BJ (cell line): ENCODE measurements at regions of chr12 and their contacts with region 1.

Region 1: DNA sequence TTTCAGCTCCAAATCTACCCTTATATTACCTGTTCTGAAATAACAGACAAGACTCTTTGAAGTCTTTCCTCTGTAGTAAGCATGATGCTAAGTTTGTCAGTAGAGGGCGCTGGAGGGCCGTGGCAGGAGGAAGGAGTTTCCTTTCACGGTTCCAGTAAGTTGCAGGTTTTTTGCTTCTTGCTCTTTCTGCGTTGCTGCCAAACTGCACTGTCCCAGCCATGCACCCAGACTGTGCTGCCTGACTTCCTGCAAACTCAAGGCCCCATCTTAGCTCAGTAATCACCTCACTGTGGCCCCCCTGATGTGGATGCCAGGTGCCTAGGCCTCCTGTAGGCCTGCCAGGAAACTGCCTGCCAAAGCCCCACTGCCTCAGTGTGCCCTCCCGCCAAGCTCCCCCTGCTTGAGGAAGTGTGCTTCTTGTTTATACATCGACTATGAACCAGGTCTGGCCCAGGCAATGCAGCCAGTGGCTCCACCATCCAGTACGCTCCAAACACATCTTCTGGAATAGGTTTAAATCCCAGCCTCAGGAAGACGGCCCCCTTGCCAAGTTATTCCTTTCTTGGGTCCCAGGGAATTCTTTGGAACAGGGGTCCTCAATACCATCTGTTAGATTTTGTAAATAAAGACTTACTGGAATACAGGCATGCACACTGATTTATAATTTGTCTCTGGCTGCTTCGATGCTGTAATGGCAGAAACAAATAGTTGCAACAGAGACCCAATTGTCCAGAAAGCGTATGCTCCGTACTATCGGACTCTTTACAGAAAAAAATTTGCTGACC is 193.7 kb upstream of the LRIG3 start:
- DNase-seq: peak; percentile 33
- H3K4me3 ChIP-seq: no peak overlapping the region
- H3K27me3 ChIP-seq: no peaks in the 10 kb centered on the region
- CTCF ChIP-seq: peak; percentile 90

Region 2: GRCh38 chr12:59077575-59078426 is 36.2 kb before region 1 on chr12:
- CTCF ChIA-PET with region 1: no interaction called
- POLR2A ChIA-PET with region 1: no interaction called
- DNase-seq: no peak
- H3K4me3 ChIP-seq: no peak overlapping the region
- H3K27me3 ChIP-seq: no peaks in the 10 kb centered on the region
- CTCF ChIP-seq: no peak

Region 3: GRCh38 chr12:59088673-59089072 is 25.4 kb before region 1 on chr12:
- CTCF ChIA-PET with region 1: no interaction called
- POLR2A ChIA-PET with region 1: no interaction called
- DNase-seq: no peak
- H3K4me3 ChIP-seq: no peak overlapping the region
- H3K27me3 ChIP-seq: no peaks in the 10 kb centered on the region
- CTCF ChIP-seq: no peak

Region 4: DNA sequence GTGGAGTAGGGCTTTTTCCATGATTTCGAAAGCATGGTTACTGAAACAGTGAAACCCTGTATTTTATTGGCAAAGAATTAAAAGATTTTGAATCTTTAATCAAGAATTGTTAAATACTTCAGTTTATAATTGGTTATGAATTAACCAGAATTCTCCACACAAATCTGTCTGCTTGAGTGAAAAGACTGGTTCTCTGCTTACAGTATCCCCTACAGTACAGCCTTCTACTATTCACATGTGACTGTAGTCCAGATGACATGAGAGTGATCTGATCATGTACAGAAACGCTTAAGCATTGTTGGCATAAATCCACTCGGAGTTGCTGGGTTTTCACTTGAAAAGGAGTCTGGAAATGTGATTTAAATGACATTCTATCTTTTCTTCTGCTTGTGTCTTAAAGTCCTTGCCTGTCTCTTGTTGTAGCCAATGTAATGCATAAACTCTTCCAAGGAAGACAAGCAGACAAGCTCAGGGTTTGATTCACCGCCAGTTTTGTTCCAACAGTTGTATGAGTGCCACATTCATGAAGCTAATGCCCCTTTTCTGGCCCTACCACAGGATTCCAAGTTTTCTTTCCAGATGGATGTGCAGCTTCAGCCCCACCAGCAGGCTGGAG is 28.3 kb after region 1 on chr12:
- CTCF ChIA-PET with region 1: interaction called, 23 read pairs
- POLR2A ChIA-PET with region 1: no interaction called
- DNase-seq: no peak
- H3K4me3 ChIP-seq: no peak overlapping the region
- H3K27me3 ChIP-seq: no peaks in the 10 kb centered on the region
- CTCF ChIP-seq: no peak

Region 5: GRCh38 chr12:59149997-59150642 is 36.1 kb after region 1 on chr12:
- CTCF ChIA-PET with region 1: interaction called, 28 read pairs
- POLR2A ChIA-PET with region 1: no interaction called
- DNase-seq: no peak
- H3K4me3 ChIP-seq: no peak overlapping the region
- H3K27me3 ChIP-seq: no peaks in the 10 kb centered on the region
- CTCF ChIP-seq: peak; percentile 83

Region 6: DNA sequence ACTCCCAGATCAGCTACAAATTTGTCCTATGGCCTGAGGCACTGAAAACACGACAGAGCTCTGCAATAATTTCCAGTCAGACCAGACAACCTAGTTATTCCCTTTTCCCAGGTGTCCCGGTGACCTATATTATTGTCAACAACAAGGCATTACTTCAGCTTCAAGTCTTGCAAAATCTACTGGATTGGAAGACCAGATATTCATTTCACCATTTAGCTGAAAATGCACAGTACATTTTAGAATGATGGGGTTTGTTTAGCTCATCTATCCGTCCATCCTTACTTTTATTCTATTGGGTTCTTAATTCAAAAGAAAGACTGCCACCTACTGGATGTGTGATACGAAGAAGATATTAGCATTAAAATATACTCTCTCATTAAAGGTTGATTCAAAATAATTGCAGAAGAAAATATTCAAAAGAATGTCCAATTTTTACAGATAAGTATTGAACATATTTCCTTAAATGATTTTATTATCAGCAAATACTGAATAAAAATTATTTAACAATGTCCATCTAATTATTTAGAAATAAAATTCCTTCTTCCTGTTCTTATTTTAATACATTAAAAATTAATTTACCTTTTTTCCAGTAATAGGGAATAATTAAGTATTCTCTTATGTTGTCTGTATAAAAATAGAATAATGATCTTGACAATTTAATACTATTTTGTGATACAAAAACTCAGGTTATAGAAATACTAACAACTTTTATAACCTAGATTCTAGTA is 51.1 kb after region 1 on chr12:
- CTCF ChIA-PET with region 1: interaction called, 18 read pairs
- POLR2A ChIA-PET with region 1: no interaction called
- DNase-seq: no peak
- H3K4me3 ChIP-seq: no peak overlapping the region
- H3K27me3 ChIP-seq: no peaks in the 10 kb centered on the region; the same call in 1 of the 2 replicates
- CTCF ChIP-seq: peak; percentile 46

Region 7: DNA sequence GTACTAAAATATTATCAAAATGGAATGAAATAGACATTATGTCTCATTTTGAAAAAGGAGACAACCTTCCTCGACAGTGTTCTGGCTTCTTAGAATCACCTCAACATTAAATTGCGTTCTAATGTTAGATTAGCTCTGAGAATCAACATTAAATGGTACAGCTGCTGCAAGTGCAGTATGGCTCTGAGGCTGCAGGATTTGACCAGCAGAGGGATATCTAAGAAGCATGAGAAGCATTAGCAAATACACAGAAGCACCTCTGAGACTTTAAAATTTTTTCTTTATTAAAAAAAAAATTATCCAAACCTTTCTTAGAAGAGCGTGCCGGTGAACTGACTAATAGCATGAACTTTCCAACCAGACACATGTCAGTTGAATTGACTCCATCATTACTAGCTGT is 59.7 kb after region 1 on chr12:
- CTCF ChIA-PET with region 1: interaction called, 18 read pairs
- POLR2A ChIA-PET with region 1: no interaction called
- DNase-seq: no peak
- H3K4me3 ChIP-seq: no peak overlapping the region
- H3K27me3 ChIP-seq: no peaks in the 10 kb centered on the region; the same call in 1 of the 2 replicates
- CTCF ChIP-seq: peak; percentile 33; the same call in 1 of the 2 replicates

Region 8: DNA sequence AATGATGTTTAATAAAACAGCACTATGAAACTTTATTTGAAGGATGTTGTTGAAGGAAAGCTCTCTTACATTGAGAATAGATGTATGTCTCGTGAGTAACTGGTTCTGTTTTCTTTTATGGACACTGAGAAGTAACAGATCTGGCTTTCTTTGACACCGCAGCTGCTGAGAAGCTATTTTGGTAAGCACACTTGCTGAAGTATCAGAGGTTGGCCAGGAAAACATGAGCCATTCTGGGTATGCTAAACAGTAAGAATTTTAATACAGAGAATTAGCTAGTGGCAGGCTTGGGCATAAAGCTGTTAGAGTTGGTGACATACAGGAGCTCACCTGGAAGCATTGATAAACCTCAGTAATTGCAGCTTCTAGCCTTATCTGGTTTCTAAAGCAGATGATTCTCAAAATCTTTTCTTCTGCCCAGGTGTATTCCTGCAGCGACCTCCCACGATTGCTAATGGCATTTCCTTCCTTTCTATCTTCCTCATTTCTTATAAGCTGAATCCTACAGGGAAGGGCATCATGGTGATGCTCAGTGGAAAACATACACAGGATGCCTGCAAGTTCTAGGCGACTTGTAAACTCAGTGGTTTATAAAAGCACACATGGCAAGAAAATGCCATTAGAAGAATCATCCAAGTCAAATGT is 190.2 kb after region 1 on chr12:
- CTCF ChIA-PET with region 1: no interaction called
- POLR2A ChIA-PET with region 1: no interaction called
- DNase-seq: no peak
- H3K4me3 ChIP-seq: no peak overlapping the region
- H3K27me3 ChIP-seq: no peaks in the 10 kb centered on the region
- CTCF ChIP-seq: no peak

Region 9: GRCh38 chr12:59834659-59835474 is 720.8 kb after region 1 on chr12:
- CTCF ChIA-PET with region 1: no interaction called
- POLR2A ChIA-PET with region 1: no interaction called
- DNase-seq: no peak
- H3K4me3 ChIP-seq: no peak overlapping the region
- H3K27me3 ChIP-seq: no peaks in the 10 kb centered on the region
- CTCF ChIP-seq: peak; percentile 33